ENCODE measurements at regions of chr2 and their contacts with region 1.

Region 1: GRCh38 chr2:159895258-159896065 is 97.5 kb upstream of the CD302 start:
- DNase-seq: no peak
- H3K4me3 Mint-ChIP-seq: no peak overlapping the region
- H3K27ac Mint-ChIP-seq: peak overlapping the region; percentile 48
- H3K4me1 Mint-ChIP-seq: peaks cover 56% of the 10 kb centered on the region
- H3K27me3 Mint-ChIP-seq: no peaks in the 10 kb centered on the region
- CTCF ChIP-seq: no peak

Region 2: DNA sequence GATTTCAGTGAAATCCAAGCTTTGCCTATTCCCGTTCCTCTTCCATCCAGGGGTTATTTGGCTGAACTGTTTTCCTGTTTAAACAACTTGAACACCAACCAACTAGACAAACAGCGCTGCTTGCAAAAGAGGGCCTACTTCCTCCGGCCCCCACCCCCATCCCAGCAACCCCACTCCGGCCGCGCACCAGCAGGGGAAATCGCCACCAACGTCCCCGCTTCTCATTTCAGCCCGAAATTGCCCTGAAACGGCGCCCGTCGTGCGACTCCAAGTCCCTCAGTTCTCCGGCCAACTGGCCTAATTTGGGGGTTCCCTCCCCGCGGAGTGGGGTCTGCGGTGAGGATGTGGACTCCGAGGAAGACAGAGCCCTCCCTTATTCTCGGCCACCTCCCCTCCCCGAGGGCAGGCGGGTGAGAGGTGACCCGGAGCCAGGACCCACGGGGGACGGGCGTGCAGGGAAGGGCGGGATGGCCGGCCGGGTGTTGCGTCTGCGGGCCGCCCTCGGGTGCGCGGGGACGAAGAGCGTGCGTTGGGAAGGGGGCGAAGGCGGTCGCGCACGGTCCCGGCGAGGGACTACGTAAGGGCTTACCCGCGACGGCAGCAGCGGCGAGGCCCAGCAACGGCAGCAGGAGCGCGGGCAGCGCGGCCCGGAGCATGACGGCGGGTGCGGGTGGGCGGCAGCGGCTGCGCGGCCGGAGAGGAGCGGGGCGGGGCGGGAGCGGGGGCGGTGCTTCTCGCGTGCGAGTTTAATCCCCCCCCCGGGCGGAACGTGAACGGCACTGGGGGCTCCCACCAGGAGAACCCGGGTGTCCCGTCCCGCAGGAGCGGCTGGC is 97.7 kb before region 1 on chr2 and contains the start of gene CD302:
- CTCF ChIA-PET with region 1: no interaction called
- intact Hi-C with region 1: no loop called
- DNase-seq: peak; percentile 65
- H3K4me3 Mint-ChIP-seq: peak within 1 kb of the TSS; percentile 82
- H3K27ac Mint-ChIP-seq: peak within 1 kb of the TSS; percentile 50
- H3K4me1 Mint-ChIP-seq: peaks cover 16% of the 10 kb centered on the region
- H3K27me3 Mint-ChIP-seq: no peaks in the 10 kb centered on the region
- CTCF ChIP-seq: no peak
- total RNA-seq, gene CD302: 3.4 and 5.4 TPM in 2 replicates

Region 3: DNA sequence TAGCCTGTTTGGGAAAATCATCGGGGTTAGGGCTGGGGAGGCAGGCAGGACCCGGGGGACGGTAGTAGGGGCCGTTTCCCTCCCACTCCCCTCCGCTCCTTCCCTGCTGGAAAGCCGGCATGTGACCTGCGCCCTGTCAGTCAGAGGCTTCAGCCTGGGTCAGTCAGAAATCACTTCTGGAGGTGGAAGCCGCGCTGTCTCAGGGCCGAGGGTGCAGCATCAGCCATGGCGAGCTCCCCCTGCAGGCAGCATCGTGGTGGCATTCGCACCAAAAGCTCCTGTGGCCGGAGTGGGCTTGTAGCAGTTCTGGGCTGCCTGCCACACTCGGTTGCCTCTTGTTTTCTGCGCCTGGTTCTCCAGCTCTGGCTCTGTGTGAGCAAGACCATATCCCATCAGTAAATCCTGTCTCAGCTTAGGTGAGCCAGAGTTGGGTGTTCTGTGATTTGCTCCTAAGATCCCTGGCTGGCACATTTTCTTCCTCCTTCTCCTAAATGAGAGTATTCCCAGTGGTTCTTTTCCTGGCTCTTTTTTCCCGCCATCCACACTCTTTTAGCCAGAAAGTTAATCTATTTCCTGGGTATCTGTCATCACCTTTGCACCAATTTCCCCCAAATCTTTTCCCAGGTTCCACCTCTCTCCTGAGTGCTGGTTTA is 26.4 kb after region 1 on chr2:
- CTCF ChIA-PET with region 1: interaction called, 10 read pairs
- intact Hi-C with region 1: no loop called
- DNase-seq: peak; percentile 89
- H3K4me3 Mint-ChIP-seq: no peak overlapping the region
- H3K27ac Mint-ChIP-seq: no peak overlapping the region
- H3K4me1 Mint-ChIP-seq: peaks cover 16% of the 10 kb centered on the region
- H3K27me3 Mint-ChIP-seq: peaks cover 14% of the 10 kb centered on the region
- CTCF ChIP-seq: peak; percentile 82

Region 4: DNA sequence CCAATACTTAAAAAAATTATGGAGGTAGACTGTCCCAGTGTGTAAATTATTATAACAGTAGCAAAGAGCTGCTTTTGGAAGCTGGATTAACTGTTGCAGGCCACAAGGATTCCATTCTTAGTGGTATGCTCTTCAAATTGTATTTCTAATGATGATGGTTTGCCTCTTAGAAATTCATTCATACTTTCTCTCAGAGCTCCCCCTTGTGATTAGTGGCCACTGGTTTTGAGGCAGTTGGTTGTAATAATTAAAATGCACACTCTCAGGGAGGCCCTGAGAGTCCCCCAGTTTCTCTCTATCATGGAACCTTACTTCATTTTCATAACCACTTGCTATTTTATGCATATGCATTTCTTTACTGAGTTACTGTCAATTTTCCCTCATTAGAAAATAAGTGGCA is 44.5 kb after region 1 on chr2:
- CTCF ChIA-PET with region 1: no interaction called
- intact Hi-C with region 1: loop called (anchors 5 kb)
- DNase-seq: peak; percentile 18
- H3K4me3 Mint-ChIP-seq: no peak overlapping the region
- H3K27ac Mint-ChIP-seq: no peak overlapping the region
- H3K4me1 Mint-ChIP-seq: no peaks in the 10 kb centered on the region
- H3K27me3 Mint-ChIP-seq: no peaks in the 10 kb centered on the region
- CTCF ChIP-seq: no peak

Region 5: GRCh38 chr2:160505256-160505655 is 609.8 kb after region 1 on chr2:
- CTCF ChIA-PET with region 1: no interaction called
- intact Hi-C with region 1: no loop called
- DNase-seq: no peak
- H3K4me3 Mint-ChIP-seq: no peak overlapping the region
- H3K27ac Mint-ChIP-seq: no peak overlapping the region
- H3K4me1 Mint-ChIP-seq: no peaks in the 10 kb centered on the region
- H3K27me3 Mint-ChIP-seq: no peaks in the 10 kb centered on the region
- CTCF ChIP-seq: no peak